GM10248 (cell line): ENCODE measurements at regions of chr7 and their contacts with region 1.

Region 1: GRCh38 chr7:37833107-37833817 is 15.1 kb upstream of the NME8 start:
- DNase-seq: peak; percentile 56
- CTCF ChIP-seq: peak; percentile 55

Region 2: DNA sequence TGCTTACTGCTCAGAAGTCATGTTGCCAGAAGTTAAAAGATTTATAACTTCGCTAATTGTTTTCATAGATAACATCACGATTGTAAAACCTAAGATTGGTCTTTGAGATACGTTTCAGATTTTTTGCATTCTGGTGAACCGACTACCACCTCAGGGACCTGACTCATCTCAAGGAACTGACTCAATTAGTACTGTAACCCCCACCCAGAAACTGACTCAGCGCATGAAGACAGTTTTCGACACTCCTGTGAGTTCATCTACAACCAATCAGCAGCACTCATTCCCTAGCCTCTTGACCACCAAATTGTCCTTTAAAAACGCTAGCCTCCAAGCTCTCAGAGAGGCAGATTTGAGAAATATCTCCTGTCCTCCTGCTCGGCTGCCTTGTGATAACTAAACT is 456.9 kb before region 1 on chr7:
- CTCF ChIA-PET with region 1: no interaction called
- POLR2A ChIA-PET with region 1: no interaction called
- DNase-seq: no peak
- CTCF ChIP-seq: no peak

Region 3: GRCh38 chr7:37518266-37518665 is 315.0 kb before region 1 on chr7:
- CTCF ChIA-PET with region 1: no interaction called
- POLR2A ChIA-PET with region 1: no interaction called
- DNase-seq: no peak
- CTCF ChIP-seq: no peak

Region 4: GRCh38 chr7:37577412-37577811 is 255.8 kb before region 1 on chr7:
- CTCF ChIA-PET with region 1: no interaction called
- POLR2A ChIA-PET with region 1: no interaction called
- DNase-seq: no peak
- CTCF ChIP-seq: no peak

Region 5: DNA sequence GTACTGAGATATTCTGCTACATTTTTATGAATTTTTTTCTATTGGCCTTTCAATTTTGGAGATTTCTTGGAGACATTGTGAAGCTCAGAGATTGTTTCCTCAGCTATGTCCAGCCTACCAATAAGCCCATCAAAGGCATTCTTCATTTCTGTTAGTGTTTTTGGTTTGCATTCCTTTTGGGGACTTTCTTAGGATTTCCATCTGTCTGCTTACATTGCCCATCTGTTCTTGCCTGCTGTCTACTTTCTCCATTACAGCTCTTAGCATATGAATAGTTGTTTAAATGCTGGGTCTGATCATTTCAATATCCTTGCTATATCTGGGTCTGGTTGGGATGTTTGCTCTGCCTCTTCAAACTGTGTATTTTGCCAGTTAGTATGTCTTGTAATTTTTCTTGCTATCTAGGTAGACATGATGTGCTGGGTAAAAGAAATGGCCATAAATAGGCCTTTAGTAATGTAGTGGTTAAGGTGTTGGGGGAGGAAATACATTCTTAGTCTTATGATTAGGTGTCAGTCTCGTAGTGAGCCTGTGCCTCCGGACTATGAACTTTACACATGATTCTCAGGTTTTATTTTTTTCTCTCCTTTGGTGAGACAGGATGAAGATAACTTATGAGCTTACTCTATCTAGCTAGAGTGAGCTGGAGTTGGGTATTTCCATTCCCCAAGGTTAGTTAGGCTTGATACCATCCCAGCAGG is 17.4 kb before region 1 on chr7:
- CTCF ChIA-PET with region 1: interaction called, 14 read pairs
- POLR2A ChIA-PET with region 1: no interaction called
- DNase-seq: peak; percentile 29
- CTCF ChIP-seq: no peak

Region 6: DNA sequence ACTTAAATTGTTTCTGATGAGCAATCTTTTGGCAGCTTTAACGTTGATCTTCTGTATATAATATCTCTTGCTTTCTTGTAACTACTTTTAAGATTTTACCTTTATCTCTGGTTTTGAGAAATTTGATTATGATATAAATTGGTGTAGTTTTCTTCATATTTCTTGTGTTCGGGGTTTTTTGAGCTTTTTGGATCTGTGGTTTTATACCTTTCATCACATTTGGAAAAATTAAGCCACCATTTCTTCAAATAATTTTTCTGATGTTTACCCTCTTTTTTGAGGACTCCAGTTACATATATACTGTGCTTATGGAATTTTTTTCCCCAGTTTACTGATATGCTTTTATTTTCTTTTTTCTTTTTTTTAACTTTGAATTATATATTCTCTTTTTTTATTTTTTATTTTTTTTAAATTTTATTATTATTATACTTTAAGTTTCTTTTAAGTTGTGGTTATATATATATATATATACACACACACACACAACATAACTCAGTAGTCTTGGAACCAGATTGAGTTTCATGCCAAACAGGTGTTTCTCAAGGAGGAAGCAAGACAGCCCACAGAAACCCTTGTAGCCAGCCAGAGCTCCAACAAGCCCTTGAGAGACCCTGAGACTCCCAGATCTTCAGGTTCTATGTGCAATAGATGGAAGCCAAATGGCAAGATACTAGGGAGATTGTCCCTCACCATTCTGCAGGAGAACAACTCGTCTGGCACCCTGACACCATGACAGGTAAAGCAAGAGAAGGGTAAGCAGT is 12.4 kb before region 1 on chr7:
- CTCF ChIA-PET with region 1: interaction called, 14 read pairs
- POLR2A ChIA-PET with region 1: no interaction called
- DNase-seq: no peak
- CTCF ChIP-seq: no peak

Region 7: DNA sequence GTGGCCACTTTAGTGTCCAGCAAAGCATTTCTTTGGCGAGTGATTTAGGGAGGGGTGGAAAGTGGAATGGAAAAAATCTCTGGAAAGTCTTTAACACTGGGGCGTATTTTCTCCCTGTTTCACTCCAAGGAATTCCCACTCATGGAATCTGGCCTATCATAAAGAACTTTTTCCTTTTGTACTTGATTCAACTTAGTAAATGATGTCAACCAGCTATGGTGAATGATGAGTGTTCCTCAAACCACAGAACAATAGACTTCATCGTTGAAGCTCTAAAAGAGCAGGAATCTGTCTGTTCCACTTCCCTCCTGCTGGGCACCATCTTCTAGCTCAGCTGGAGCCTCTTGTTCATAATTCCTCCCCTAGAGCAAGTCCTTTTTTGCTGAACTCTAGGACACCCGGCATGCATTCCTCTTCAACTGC is 153.7 kb after region 1 on chr7:
- CTCF ChIA-PET with region 1: no interaction called
- POLR2A ChIA-PET with region 1: no interaction called
- DNase-seq: no peak
- CTCF ChIP-seq: no peak